Gastrocnemius medialis (tissue), 4 donors: ENCODE measurements at regions of chr21 and their contacts with region 1.

Region 1: GRCh38 chr21:28745131-28746016 is 247.3 kb downstream of the LTN1 start:
- DNase-seq: peak; percentile 56 to 58
- ATAC-seq: peak; percentile 92 to 95
- H3K4me3 ChIP-seq: peak overlapping the region; percentile 59 to 63 (median 62)
- H3K27ac ChIP-seq: peak overlapping the region; percentile 71 to 79 (median 76)
- H3K4me1 ChIP-seq: peaks cover 3 to 9% of the 10 kb centered on the region in 2 donors
- H3K27me3 ChIP-seq: no peaks in the 10 kb centered on the region
- CTCF ChIP-seq: peak; percentile 87 to 99 (median 91)
- POLR2A ChIP-seq: no peak

Region 2: GRCh38 chr21:26842976-26843932 is 1902.1 kb before region 1 on chr21:
- in situ Hi-C with region 1: loop called in 3 of 4 experiments (anchors 10 kb)
- intact Hi-C with region 1: loop called (anchors 5 kb)
- DNase-seq: peak; percentile 85 to 96
- ATAC-seq: peak; percentile 61 to 62
- H3K4me3 ChIP-seq: peak overlapping the region; percentile 65 to 88 (median 80)
- H3K27ac ChIP-seq: peak overlapping the region; percentile 88 to 96 (median 90)
- H3K4me1 ChIP-seq: peaks cover 29 to 43% of the 10 kb centered on the region in 2 donors
- H3K27me3 ChIP-seq: no peaks in the 10 kb centered on the region
- CTCF ChIP-seq: peak in 2 of 5 experiments; percentile 48 to 54
- POLR2A ChIP-seq: peak; percentile 28 to 57

Region 3: GRCh38 chr21:28069450-28069923 is 675.9 kb before region 1 on chr21:
- in situ Hi-C with region 1: loop called in 1 of 4 experiments (anchors 25 kb)
- intact Hi-C with region 1: loop called (anchors 10 kb)
- DNase-seq: peak in 1 of 2 donors; percentile 25
- ATAC-seq: peak; percentile 63 to 70
- H3K4me3 ChIP-seq: peak overlapping the region; percentile 9 to 38 (median 20)
- H3K27ac ChIP-seq: peak overlapping the region; percentile 87 to 91 (median 88)
- H3K4me1 ChIP-seq: peaks cover 17 to 43% of the 10 kb centered on the region in 2 donors
- H3K27me3 ChIP-seq: no peaks in the 10 kb centered on the region
- CTCF ChIP-seq: no peak
- POLR2A ChIP-seq: no peak

Region 4: GRCh38 chr21:28336314-28336713 is 409.1 kb before region 1 on chr21:
- in situ Hi-C with region 1: loop called in 2 of 4 experiments (anchors 5 to 25 kb)
- intact Hi-C with region 1: loop called (anchors 10 kb)
- DNase-seq: no peak
- ATAC-seq: peak; percentile 57 to 65
- H3K4me3 ChIP-seq: no peak overlapping the region
- H3K27ac ChIP-seq: no peak overlapping the region
- H3K4me1 ChIP-seq: peaks cover 0 to 18% of the 10 kb centered on the region in 2 donors
- H3K27me3 ChIP-seq: no peaks in the 10 kb centered on the region
- CTCF ChIP-seq: peak in 4 of 5 experiments; percentile 21 to 64 (median 56)
- POLR2A ChIP-seq: no peak

Region 5: GRCh38 chr21:28516991-28517592 is 228.3 kb before region 1 on chr21:
- in situ Hi-C with region 1: loop called (anchors 5 to 10 kb)
- intact Hi-C with region 1: loop called (anchors 1 kb)
- DNase-seq: peak; percentile 18 to 37
- ATAC-seq: peak; percentile 69 to 78
- H3K4me3 ChIP-seq: no peak overlapping the region
- H3K27ac ChIP-seq: no peak overlapping the region
- H3K4me1 ChIP-seq: peaks cover 9% of the 10 kb centered on the region in 2 donors
- H3K27me3 ChIP-seq: no peaks in the 10 kb centered on the region
- CTCF ChIP-seq: peak in 4 of 5 experiments; percentile 37 to 74 (median 52)
- POLR2A ChIP-seq: no peak

Region 6: GRCh38 chr21:28811860-28812259 is 66.5 kb after region 1 on chr21:
- in situ Hi-C with region 1: no loop called
- intact Hi-C with region 1: no loop called
- DNase-seq: no peak
- ATAC-seq: no peak
- H3K4me3 ChIP-seq: no peak overlapping the region
- H3K27ac ChIP-seq: no peak overlapping the region
- H3K4me1 ChIP-seq: no peaks in the 10 kb centered on the region
- H3K27me3 ChIP-seq: no peaks in the 10 kb centered on the region
- CTCF ChIP-seq: no peak
- POLR2A ChIP-seq: no peak

Region 7: DNA sequence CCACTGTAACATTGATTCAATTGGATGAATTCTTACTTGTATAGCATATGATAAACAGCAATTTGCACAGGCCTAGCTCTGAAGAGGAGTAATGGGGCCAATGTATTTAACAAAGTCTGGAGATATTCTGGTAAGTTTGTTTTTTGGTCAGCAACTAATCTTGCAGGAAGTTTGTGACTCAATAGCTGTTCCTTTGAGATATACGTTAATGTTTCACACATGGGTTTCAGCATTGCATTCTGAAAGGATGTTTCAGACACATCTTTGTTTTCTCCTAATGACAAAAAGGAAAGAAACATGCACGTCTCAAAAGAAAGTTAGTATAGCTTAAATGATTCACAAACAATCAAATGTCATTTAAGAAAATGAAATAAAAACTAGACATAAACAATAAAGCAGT is 198.3 kb after region 1 on chr21:
- in situ Hi-C with region 1: loop called in 1 of 4 experiments (anchors 10 kb)
- intact Hi-C with region 1: no loop called
- DNase-seq: no peak
- ATAC-seq: no peak
- H3K4me3 ChIP-seq: no peak overlapping the region
- H3K27ac ChIP-seq: no peak overlapping the region
- H3K4me1 ChIP-seq: no peaks in the 10 kb centered on the region
- H3K27me3 ChIP-seq: no peaks in the 10 kb centered on the region
- CTCF ChIP-seq: no peak
- POLR2A ChIP-seq: no peak